ENCODE measurements at regions of chr6 and their contacts with region 1.

Region 1: GRCh38 chr6:119122336-119122735 is 43.9 kb upstream of the FAM184A start:
- DNase-seq: no peak
- H3K4me3 ChIP-seq: no peak overlapping the region
- H3K27me3 ChIP-seq: no peaks in the 10 kb centered on the region
- CTCF ChIP-seq: no peak

Region 2: GRCh38 chr6:119105282-119105681 is 17.1 kb before region 1 on chr6:
- CTCF ChIA-PET with region 1: interaction called, 4 read pairs
- POLR2A ChIA-PET with region 1: interaction called, 19 read pairs
- DNase-seq: no peak
- H3K4me3 ChIP-seq: no peak overlapping the region
- H3K27me3 ChIP-seq: no peaks in the 10 kb centered on the region
- CTCF ChIP-seq: no peak

Measured in BJ (cell line).